Body of pancreas (tissue), 4 donors: ENCODE measurements at regions of chr17 and their contacts with region 1.

Region 1: DNA sequence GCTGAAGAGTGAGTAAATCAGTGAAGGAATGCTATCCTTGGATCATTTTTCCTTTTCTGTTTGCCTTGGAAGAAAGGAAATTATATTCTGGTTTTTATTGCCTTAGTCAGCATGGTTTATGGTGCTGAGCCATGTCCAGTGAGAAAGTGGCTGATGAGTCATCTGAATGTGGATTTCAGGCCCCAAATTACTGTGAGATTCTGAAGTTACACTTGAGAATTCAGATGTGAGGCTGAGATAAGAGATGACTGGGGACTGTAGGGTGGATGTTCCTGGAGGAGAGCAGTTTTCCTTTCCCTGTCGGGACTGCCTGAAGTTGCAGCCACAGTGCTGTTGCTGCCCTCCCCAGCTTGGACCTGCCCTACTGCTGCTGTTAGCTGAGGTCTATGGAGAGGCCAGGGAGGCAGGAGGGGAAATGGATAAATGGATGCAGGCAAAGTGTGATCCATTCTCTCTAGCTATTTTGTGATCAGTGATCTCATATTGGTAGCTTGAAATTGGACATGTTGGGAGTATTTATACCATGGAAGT is 4.2 kb upstream of the MAP3K14 start:
- DNase-seq: no peak
- ATAC-seq: no peak
- H3K4me3 ChIP-seq: no peak overlapping the region
- H3K27ac ChIP-seq: peak overlapping the region in 2 of 4 donors; percentile 8 to 13
- H3K4me1 ChIP-seq: peaks cover 10% of the 10 kb centered on the region
- H3K27me3 ChIP-seq: no peaks in the 10 kb centered on the region
- CTCF ChIP-seq: no peak
- POLR2A ChIP-seq: no peak

Region 2: GRCh38 chr17:45270828-45271418 is 50.1 kb before region 1 on chr17:
- intact Hi-C with region 1: loop called (anchors 5 kb)
- DNase-seq: peak in 1 of 4 donors; percentile 39
- ATAC-seq: no peak
- H3K4me3 ChIP-seq: no peak overlapping the region
- H3K27ac ChIP-seq: no peak overlapping the region
- H3K4me1 ChIP-seq: no peaks in the 10 kb centered on the region
- H3K27me3 ChIP-seq: no peaks in the 10 kb centered on the region
- CTCF ChIP-seq: peak in 5 of 7 experiments; percentile 22 to 37 (median 27)
- POLR2A ChIP-seq: no peak

Region 3: GRCh38 chr17:45371414-45372327 is 50.7 kb after region 1 on chr17:
- intact Hi-C with region 1: loop called (anchors 10 kb)
- DNase-seq: peak; percentile 80 to 87 (median 83)
- ATAC-seq: peak; percentile 96
- H3K4me3 ChIP-seq: peak overlapping the region in 1 of 2 donors; percentile 3
- H3K27ac ChIP-seq: peak overlapping the region; percentile 19 to 88 (median 86)
- H3K4me1 ChIP-seq: peaks cover 18% of the 10 kb centered on the region
- H3K27me3 ChIP-seq: no peaks in the 10 kb centered on the region
- CTCF ChIP-seq: peak in 1 of 7 experiments; percentile 7
- POLR2A ChIP-seq: peak; percentile 71 to 75 (median 75)